Left cardiac atrium (tissue), 4 donors: ENCODE measurements at regions of chr12 and their contacts with region 1.

Region 1: DNA sequence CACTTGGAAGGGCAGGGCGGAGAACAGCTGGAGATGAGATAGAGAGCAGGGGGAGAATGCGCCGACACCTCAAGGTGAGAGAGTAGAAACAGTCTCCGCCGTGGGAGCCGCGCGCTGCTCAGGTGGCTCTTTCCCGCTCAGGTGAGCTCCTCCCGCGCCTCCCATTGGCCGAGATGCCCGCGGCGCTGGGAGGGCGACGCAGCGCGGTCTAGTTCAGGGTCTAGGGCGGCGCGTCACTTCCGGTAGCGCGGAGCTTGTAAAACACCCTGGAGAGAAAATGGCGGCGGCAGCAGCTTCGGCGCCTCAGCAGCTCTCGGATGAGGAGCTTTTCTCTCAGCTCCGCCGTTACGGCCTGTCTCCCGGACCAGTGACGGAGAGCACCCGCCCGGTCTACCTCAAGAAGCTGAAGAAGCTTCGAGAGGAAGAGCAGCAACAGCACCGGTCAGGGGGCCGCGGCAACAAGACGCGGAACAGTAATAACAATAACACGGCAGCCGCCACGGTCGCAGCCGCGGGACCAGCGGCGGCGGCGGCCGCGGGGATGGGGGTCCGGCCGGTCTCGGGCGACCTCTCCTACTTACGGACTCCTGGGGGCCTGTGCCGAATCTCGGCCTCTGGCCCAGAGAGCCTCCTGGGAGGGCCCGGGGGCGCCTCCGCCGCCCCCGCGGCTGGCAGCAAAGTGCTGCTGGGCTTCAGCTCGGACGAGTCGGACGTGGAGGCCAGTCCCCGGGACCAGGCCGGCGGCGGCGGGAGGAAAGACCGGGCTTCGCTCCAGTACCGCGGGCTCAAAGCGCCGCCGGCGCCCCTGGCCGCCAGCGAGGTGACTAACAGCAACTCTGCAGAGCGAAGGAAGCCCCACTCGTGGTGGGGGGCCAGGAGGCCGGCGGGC is at the start of gene LEMD3:
- DNase-seq: peak; percentile 96
- ATAC-seq: peak; percentile 98
- total RNA-seq, gene LEMD3: 16.0 to 18.6 TPM

Region 2: GRCh38 chr12:65232476-65233077 is 63.0 kb after region 1 on chr12:
- intact Hi-C with region 1: loop called in 1 of 2 experiments (anchors 10 kb)
- DNase-seq: no peak
- ATAC-seq: no peak